GM18951 (cell line): ENCODE measurements at regions of chrX and their contacts with region 1.

Region 1: DNA sequence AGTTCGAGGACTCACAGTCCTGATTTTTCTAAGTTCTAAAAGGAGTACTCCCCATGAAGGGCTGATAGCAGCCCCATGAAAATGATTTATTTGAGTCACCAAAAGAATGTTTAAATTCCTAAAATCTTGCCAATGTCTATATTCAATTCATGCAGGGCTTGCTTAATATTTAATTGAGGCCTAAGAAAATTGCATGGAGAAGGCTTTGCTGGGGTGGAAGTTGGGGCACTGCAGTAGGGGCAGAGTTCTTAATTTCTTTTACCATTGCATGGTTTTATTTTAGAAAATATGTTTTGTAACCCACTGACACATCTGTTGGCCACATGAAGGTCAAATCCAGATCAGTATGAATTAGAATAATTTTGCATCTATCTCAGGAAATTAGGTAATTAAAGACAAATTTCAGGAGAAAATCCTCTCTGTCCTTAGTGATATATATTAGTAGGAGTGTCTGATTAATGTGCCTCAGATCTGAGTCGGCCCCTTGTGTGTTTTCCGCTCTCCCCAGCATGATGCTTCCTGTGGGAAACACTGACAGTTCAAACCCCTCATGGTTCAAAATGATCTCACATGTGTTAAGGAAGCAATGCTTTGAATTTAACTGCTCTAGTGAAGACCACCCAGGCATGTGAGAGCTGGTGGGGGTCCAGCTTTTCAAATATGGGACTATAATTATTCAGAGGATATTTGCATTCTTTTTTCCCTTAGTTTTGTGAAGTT is 54.0 kb upstream of the EGFL6 start:
- POLR2A ChIP-seq: no peak

Region 2: GRCh38 chrX:13110433-13111324 is 404.7 kb before region 1 on chrX:
- in situ Hi-C with region 1: no loop called
- POLR2A ChIP-seq: no peak

Region 3: DNA sequence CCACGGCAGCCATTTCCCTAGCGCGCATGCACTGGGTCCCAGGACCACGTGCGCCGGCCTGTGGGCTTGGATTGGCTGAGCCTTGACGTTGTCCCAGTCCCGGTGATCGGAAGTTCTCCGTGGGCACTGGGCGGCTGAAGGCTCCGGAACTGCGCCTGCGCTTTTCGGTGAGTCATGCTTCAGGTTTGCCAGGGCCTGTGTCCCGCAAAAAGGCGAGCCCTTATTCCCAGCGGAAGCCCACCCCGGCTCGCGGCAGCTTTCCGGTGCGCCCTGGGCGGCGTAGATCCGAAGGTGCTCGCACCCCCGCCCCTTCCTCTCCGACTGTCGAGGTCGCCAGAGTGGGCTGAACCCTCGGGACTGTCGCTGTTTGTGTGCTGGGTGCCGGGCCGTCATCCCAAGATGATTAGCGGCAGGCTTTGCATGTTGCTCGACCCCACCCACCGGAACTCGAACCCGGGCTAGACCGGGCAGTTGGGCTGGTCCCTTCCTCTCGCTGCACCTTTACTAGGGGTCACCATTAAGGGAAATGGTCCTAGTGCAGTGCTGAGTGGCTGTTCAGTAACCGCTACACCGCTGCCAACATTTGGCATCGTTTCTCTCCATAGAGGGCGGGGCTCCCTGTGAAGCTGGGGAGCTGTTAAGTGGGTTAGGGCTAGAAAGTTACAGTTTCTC is 137.8 kb after region 1 on chrX and contains the start of gene TCEANC:
- in situ Hi-C with region 1: loop called (anchors 5 kb)
- POLR2A ChIP-seq: peak; percentile 81

Region 4: DNA sequence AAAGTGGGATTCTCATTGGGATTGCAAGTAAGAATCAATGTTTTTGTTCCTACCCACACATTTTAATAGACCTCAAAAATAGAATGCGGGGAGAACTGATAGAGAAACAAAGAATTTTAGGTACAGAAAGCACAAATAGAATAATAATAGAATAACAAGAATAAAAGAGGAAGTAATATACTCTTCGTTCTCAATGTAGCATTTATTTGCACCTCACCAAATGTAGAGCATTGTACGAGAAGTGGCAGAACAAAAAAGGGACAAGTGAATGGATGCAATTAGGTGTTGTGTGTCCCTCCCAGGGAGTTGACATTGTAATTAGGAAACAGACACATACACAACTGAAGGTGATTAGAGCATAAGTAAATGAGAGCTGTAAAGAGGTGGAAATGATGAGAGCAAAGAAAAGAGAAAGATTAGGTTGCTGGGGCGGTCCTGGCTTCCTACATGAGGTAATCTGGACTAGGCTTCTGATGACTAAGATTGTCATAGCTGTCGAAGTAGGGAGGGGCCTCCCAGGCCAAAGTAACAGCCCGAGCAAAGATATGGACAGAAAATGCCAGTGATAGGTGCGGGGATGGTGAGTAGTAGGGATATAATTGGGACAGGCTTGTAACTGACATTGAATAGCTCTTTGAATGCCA is 183.9 kb after region 1 on chrX:
- in situ Hi-C with region 1: no loop called
- POLR2A ChIP-seq: no peak